ENCODE measurements at regions of chr20 and their contacts with region 1.

Region 1: GRCh38 chr20:61875221-61875885 is 190.3 kb downstream of the TAF4 start:
- DNase-seq: peak; percentile 45
- H3K4me3 ChIP-seq: no peak overlapping the region
- H3K27ac ChIP-seq: no peak overlapping the region
- H3K4me1 ChIP-seq: no peaks in the 10 kb centered on the region
- H3K27me3 ChIP-seq: no peaks in the 10 kb centered on the region
- CTCF ChIP-seq: no peak
- EP300 ChIP-seq: no peak
- RAD21 ChIP-seq: peak; percentile 22

Region 2: DNA sequence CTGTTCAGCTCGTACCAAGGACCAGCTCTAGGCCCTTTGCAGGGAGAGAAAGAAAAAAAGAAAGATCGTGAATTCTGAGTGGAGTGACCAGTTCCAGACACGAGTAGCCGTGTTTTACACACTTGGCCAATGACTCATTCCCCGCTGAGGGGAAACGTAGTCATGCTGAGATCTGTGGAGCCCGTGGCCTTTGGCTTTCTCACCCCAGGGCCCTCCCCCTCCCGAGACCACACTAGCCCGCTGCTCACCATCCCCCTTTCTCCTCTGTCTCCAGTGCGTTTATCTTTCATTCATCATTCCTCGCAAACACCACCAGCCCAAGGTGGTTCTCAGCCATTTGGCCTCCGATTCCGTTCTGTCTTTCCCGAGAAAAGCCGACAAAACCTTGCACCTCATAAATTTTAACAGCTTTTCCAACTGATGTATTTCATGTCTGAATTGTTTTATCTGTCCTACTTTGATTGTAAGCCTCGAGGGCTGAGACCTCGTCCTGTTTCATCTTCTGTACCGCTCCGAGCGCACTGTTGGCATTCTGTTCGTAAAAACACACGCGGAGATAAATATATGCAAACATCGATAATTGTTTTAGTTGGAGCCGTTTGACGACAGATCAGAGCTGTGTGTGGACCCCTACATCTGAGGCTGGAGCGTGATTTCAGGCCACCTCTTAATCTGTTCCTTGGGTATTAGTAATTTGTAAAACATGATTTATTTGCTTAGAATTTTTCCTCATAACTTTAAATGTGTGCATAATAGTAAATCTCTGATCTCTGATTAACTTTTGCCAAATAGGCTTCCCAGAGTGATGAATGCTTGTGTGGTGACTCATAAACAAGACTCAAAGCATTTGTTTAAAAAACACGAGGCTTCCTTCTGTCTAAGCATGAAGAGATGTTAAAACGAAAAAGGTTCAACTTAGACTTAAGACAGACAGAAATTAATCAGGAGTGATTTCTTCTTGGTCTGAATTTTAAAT is 286.7 kb before region 1 on chr20:
- CTCF ChIA-PET with region 1: no interaction called
- POLR2A ChIA-PET with region 1: no interaction called
- DNase-seq: no peak
- H3K4me3 ChIP-seq: no peak overlapping the region
- H3K27ac ChIP-seq: no peak overlapping the region
- H3K4me1 ChIP-seq: peaks cover 0 to 4% of the 10 kb centered on the region in 2 experiments; a peak in 1 of 4 replicates
- H3K27me3 ChIP-seq: no peaks in the 10 kb centered on the region
- CTCF ChIP-seq: no peak
- EP300 ChIP-seq: no peak
- RAD21 ChIP-seq: no peak

Region 3: DNA sequence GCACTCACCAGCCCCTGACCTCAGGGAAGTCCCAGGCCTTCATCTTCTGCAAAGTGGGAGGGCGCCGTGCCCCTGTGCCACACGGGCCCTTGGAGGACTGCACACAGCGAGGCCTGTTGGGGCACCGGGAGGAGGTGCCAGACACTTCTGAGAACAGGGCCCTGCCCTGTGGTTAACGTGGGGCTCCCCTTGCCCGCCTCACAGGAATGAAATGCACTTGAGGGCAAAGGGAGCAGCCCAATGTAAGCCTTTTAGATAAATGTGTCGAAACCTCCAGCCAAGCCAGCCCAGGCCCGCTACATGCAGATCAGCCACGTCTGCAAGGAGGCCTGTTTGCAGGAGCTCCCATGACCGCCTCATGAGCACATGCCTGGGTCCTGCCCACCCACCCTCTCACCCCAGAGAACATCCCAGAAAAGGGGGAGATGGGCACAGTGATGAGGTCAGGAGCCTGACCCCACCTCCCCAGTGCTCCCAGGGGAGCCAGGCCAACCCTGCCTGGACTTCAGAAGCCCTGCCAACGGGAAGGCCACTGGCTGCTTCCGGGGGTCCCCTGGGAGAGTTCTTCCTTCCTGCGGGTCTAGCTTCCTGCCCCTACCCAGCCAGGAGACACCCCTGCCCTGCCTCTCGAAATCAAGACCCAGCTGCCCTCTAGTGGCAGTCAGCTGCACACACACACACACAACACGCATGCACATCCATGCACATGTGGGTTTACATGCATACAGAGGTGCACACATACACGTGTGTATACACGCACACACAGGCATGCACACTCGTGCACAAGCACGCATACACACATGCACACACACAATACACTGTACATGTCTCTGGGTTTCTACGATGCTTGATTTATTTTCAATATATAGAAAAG is 11.6 kb after region 1 on chr20:
- CTCF ChIA-PET with region 1: interaction called, 25 read pairs
- POLR2A ChIA-PET with region 1: no interaction called
- DNase-seq: peak; percentile 82
- H3K4me3 ChIP-seq: no peak overlapping the region; a peak in 1 of 4 replicates
- H3K27ac ChIP-seq: no peak overlapping the region
- H3K4me1 ChIP-seq: no peaks in the 10 kb centered on the region
- H3K27me3 ChIP-seq: no peaks in the 10 kb centered on the region
- CTCF ChIP-seq: peak; percentile 37
- EP300 ChIP-seq: no peak
- RAD21 ChIP-seq: peak; percentile 74